Spleen (tissue), 13 donors: ENCODE measurements at regions of chr5 and their contacts with region 1.

Region 1: GRCh38 chr5:133868946-133869518 is 99.4 kb downstream of the C5orf15 start:
- DNase-seq: peak; percentile 86
- H3K4me3 ChIP-seq: peak overlapping the region in 1 of 8 donors; percentile 32
- H3K27ac ChIP-seq: no peak overlapping the region
- H3K4me1 ChIP-seq: peaks cover 0 to 13% (median 5%) of the 10 kb centered on the region in 6 donors
- H3K27me3 ChIP-seq: peaks cover 0 to 19% (median 0%) of the 10 kb centered on the region in 7 donors
- CTCF ChIP-seq: peak; percentile 27 to 80 (median 73)
- POLR2A ChIP-seq: no peak

Region 2: DNA sequence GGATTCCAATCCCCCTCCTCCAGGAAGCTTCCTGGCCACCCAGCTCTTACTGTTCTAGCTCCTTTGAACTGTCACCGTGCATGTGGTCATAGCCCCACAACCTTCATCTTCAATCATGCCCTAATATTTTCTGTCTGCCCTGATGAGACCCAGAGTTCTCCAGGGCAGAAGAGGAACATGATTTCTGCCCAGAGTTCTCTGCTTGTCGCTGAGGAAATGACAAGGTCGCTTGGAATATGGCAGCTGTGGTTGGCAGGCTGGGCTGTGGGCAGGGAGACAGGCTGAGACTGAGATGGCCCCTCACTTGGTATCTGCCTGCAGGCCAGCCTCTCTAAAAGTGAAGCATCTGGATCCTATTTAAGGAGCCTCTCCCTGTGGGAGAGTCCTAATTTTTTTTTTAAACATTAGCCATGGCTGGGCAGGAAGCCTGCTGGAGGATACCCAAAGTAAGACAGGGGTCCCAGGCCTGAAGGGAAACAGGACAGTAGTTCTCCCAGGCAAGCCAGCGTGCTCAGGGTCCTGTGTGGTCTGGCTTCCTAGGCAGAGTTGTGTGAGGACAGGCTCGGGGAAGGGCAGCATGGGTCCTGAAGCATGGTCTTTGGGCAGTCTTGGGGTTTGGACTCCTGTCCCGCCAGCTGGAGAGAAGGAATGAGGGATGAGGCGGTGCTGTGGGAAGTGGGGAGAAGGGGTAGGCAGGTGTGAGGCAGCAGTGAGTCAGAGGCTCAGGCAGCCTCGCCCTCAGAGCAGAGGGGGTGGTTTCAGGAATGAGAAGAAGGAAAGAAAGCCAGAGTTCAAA is 498.8 kb before region 1 on chr5:
- intact Hi-C with region 1: no loop called
- DNase-seq: no peak
- H3K4me3 ChIP-seq: no peak overlapping the region
- H3K27ac ChIP-seq: no peak overlapping the region
- H3K4me1 ChIP-seq: no peaks in the 10 kb centered on the region
- H3K27me3 ChIP-seq: peaks cover 0 to 26% (median 0%) of the 10 kb centered on the region in 7 donors
- CTCF ChIP-seq: no peak
- POLR2A ChIP-seq: no peak

Region 3: GRCh38 chr5:133423618-133424282 is 445.3 kb before region 1 on chr5:
- intact Hi-C with region 1: loop called (anchors 5 kb)
- DNase-seq: peak; percentile 92
- H3K4me3 ChIP-seq: no peak overlapping the region
- H3K27ac ChIP-seq: no peak overlapping the region
- H3K4me1 ChIP-seq: peaks cover 0 to 7% (median 3%) of the 10 kb centered on the region in 6 donors
- H3K27me3 ChIP-seq: peaks cover 0 to 6% (median 0%) of the 10 kb centered on the region in 7 donors
- CTCF ChIP-seq: peak; percentile 52 to 94 (median 91)
- POLR2A ChIP-seq: no peak

Region 4: GRCh38 chr5:133754575-133755169 is 114.4 kb before region 1 on chr5:
- intact Hi-C with region 1: loop called (anchors 10 kb)
- DNase-seq: no peak
- H3K4me3 ChIP-seq: no peak overlapping the region
- H3K27ac ChIP-seq: no peak overlapping the region
- H3K4me1 ChIP-seq: no peaks in the 10 kb centered on the region
- H3K27me3 ChIP-seq: peaks cover 0 to 24% (median 3%) of the 10 kb centered on the region in 7 donors
- CTCF ChIP-seq: peak in 6 of 11 experiments; percentile 20 to 55 (median 37)
- POLR2A ChIP-seq: no peak

Region 5: GRCh38 chr5:134176511-134177368 is 307.7 kb after region 1 on chr5 and contains the start of gene SKP1:
- intact Hi-C with region 1: no loop called
- DNase-seq: peak; percentile 96
- H3K4me3 ChIP-seq: peak within 1 kb of the TSS; percentile 72 to 97 (median 88)
- H3K27ac ChIP-seq: peak within 1 kb of the TSS; percentile 97 to 100 (median 99)
- H3K4me1 ChIP-seq: peaks cover 25 to 54% (median 38%) of the 10 kb centered on the region in 6 donors
- H3K27me3 ChIP-seq: no peaks in the 10 kb centered on the region
- CTCF ChIP-seq: no peak
- POLR2A ChIP-seq: peak; percentile 66 to 96 (median 84)
- total RNA-seq, gene SKP1: 121 to 246 (median 193) TPM

Region 6: GRCh38 chr5:134328619-134329018 is 459.6 kb after region 1 on chr5:
- intact Hi-C with region 1: no loop called
- DNase-seq: no peak
- H3K4me3 ChIP-seq: no peak overlapping the region
- H3K27ac ChIP-seq: no peak overlapping the region
- H3K4me1 ChIP-seq: no peaks in the 10 kb centered on the region
- H3K27me3 ChIP-seq: no peaks in the 10 kb centered on the region
- CTCF ChIP-seq: no peak
- POLR2A ChIP-seq: no peak